Naive thymus-derived CD4-positive, alpha-beta T cell (primary cell): ENCODE measurements at regions of chr7 and their contacts with region 1.

Region 1: DNA sequence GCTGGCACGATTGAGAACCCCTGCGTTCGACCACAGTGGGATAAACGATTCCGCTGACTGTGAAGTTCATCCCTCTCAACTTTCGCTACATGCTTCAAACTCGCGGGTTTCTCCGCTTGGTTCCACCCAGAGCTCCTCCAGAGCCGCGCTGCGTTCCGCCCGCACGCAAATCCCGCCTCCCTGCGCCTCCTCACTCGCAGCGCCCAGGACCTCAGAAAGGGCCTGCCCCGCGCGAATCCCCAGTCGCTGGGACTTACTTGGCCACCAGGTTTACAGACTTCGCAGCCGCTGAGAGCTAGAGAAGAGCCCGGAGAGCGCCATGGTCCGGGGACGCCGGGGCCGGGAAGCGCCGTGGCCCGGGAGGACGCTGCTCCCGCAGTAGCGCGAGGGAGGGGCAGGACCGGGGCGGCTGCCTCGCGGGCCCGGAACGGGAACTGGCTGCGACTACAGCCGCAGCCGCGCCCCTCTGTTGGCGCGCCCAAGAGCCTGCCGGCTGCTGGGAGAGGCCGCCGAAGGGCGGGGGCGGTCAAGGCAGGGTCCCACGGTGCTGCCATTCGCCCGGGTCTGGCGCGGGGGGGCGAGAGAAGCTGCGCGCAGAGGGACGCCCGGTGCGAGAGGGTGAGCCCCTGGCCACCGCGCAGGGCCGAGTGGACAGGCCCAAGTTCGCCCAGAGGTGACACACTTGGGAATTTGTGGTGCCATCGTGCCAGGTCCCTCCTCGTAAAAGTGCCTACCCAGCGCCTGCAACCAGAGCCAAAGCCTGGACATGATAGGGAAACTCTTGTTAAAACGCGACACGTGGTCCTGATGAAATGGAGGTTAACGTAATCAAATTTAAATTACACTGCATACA is at the start of gene NOD1:
- DNase-seq: peak; percentile 50 to 80 (median 65)
- ATAC-seq: peak; percentile 91
- H3K4me3 ChIP-seq: peak within 1 kb of the TSS; percentile 64
- H3K4me3 Mint-ChIP-seq: peak within 1 kb of the TSS in 9 of 10 donors; percentile 92 to 95 (median 94)
- H3K27ac ChIP-seq: peak within 1 kb of the TSS; percentile 80
- H3K27ac Mint-ChIP-seq: peak within 1 kb of the TSS in 6 of 9 donors; percentile 73 to 95 (median 90)
- H3K4me1 ChIP-seq: peaks cover 10 to 19% of the 10 kb centered on the region in 2 donors
- H3K4me1 Mint-ChIP-seq: peaks cover 22 to 54% (median 47%) of the 10 kb centered on the region in 7 donors
- H3K27me3 ChIP-seq: no peaks in the 10 kb centered on the region
- H3K27me3 Mint-ChIP-seq: no peaks in the 10 kb centered on the region
- total RNA-seq, gene NOD1: 17.3 to 24.6 (median 19.2) TPM

Region 2: DNA sequence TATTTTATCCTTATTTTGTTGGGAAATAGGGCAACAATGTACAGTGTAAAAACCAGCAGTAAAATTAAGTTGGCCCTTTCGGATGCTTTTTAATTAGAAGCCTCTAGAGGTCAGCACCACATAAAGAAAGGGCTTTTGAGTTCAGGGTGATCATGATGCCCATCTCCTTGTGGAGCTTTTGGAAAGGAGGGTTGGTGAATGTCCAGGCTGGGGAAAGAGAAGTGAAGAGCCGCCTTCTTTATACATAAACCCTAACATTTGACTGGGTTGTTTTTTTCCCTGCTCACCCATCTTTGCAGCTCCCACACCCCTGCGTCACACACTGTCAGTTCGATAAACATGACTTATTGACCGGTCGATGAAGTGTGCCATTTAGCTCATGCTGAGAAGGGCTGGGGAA is 314.0 kb before region 1 on chr7:
- CTCF ChIA-PET with region 1: no interaction called
- POLR2A ChIA-PET with region 1: no interaction called
- intact Hi-C with region 1: loop called in 1 of 2 experiments (anchors 5 kb)
- DNase-seq: no peak
- ATAC-seq: peak; percentile 43
- H3K4me3 ChIP-seq: no peak overlapping the region
- H3K4me3 Mint-ChIP-seq: no peak overlapping the region
- H3K27ac ChIP-seq: no peak overlapping the region
- H3K27ac Mint-ChIP-seq: no peak overlapping the region
- H3K4me1 ChIP-seq: peaks cover 10 to 20% of the 10 kb centered on the region in 2 donors
- H3K4me1 Mint-ChIP-seq: peaks cover 25 to 44% (median 32%) of the 10 kb centered on the region in 7 donors
- H3K27me3 ChIP-seq: no peaks in the 10 kb centered on the region
- H3K27me3 Mint-ChIP-seq: peaks cover 0 to 3% (median 0%) of the 10 kb centered on the region in 5 donors

Region 3: DNA sequence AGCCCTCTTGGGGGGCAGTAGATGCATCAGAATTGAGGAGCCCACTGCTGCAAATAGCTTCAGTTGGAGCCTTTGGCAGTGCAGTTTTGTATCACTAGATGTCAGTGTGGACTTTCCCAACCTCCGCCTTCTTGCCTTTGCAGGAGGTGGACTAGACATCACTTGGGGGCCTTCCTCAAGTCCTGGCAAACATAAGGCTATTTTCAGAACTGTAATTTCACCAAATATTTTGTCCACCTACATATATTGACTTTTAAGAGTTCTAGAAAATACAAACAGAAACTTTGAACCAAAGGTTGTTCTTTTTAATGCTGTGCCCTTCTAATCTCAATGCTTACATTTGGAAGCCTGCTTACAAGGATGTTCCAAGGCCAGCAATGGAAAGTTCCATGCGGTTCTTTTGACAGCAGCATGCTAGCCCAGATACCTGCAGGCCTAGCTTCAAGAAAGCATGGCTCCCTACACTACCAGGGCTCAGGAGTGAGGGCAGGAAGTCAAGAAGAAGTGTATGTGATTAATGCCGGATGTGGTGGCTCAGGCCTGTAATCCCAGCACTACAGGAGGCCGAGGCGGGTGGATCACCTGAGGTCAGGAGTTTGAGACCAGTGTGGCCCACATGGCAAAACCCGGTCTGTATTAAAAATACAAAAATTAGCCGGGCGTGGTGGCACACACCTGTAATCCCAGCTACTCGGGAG is 202.2 kb before region 1 on chr7:
- CTCF ChIA-PET with region 1: interaction called, 3 read pairs
- POLR2A ChIA-PET with region 1: no interaction called
- intact Hi-C with region 1: loop called in 1 of 2 experiments (anchors 2 kb)
- DNase-seq: peak; percentile 10 to 66 (median 40)
- ATAC-seq: peak; percentile 79
- H3K4me3 ChIP-seq: no peak overlapping the region
- H3K4me3 Mint-ChIP-seq: no peak overlapping the region
- H3K27ac ChIP-seq: no peak overlapping the region
- H3K27ac Mint-ChIP-seq: peak overlapping the region in 1 of 9 donors; percentile 10
- H3K4me1 ChIP-seq: no peaks in the 10 kb centered on the region
- H3K4me1 Mint-ChIP-seq: peaks cover 0 to 9% (median 4%) of the 10 kb centered on the region in 7 donors
- H3K27me3 ChIP-seq: no peaks in the 10 kb centered on the region
- H3K27me3 Mint-ChIP-seq: peaks cover 0 to 4% (median 0%) of the 10 kb centered on the region in 5 donors

Region 4: GRCh38 chr7:30322271-30323005 is 156.1 kb before region 1 on chr7:
- CTCF ChIA-PET with region 1: no interaction called
- POLR2A ChIA-PET with region 1: no interaction called
- intact Hi-C with region 1: loop called in 1 of 2 experiments (anchors 2 kb)
- DNase-seq: peak in 6 of 9 donors; percentile 9 to 48 (median 34)
- ATAC-seq: peak; percentile 86
- H3K4me3 ChIP-seq: peak overlapping the region; percentile 44
- H3K4me3 Mint-ChIP-seq: peak overlapping the region; percentile 72 to 92 (median 86)
- H3K27ac ChIP-seq: peak overlapping the region; percentile 75
- H3K27ac Mint-ChIP-seq: peak overlapping the region; percentile 88 to 97 (median 93)
- H3K4me1 ChIP-seq: peaks cover 20 to 26% of the 10 kb centered on the region in 2 donors
- H3K4me1 Mint-ChIP-seq: peaks cover 41 to 75% (median 71%) of the 10 kb centered on the region in 7 donors
- H3K27me3 ChIP-seq: no peaks in the 10 kb centered on the region
- H3K27me3 Mint-ChIP-seq: no peaks in the 10 kb centered on the region

Region 5: DNA sequence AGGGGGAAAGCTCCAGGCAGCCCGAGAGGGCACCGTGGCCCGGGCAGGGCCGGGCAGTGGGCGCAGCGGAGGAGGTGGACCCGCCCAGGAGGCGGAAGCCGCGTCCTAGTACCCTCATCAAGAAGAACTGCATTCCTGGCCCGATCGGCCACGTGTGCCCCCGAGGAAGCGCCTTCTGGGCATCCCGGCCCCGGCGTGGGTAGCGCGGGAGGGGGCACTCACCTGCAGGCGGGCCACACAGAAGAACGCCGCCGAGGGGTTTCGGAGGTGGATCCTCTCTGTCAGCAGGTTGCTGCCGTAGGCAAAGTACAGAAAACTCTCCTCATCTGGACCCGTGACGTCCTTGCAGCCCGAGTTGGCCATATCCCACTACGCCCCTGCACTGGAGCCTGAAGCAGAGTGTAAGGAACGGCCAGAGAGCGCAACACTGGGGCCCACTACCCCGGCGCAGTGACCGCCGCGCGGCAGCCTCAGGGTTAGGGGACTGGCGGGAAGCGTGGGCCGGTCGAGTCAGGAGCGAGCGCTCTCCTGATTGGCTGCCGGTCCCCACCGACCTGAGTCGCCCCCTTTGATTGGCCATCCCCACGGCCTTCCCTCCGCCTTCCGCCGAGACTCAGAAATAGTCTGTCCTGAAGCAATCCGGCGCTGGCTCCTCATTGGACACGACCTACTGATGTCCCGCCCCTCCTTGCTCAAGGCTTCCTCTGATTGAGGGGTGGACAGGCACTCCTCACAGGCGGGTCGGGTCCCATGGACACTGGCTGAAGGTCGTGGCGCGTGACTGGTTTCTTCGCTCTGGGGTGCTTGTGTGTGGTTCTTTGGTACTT is 26.0 kb after region 1 on chr7 and contains the start of gene GGCT:
- CTCF ChIA-PET with region 1: no interaction called
- POLR2A ChIA-PET with region 1: interaction called, 5 read pairs
- intact Hi-C with region 1: loop called (anchors 1 kb)
- DNase-seq: peak; percentile 88 to 97 (median 95)
- ATAC-seq: peak; percentile 99
- H3K4me3 ChIP-seq: peak within 1 kb of the TSS; percentile 91
- H3K4me3 Mint-ChIP-seq: peak within 1 kb of the TSS; percentile 90 to 96 (median 95)
- H3K27ac ChIP-seq: peak within 1 kb of the TSS; percentile 72
- H3K27ac Mint-ChIP-seq: peak within 1 kb of the TSS; percentile 87 to 99 (median 91)
- H3K4me1 ChIP-seq: peaks cover 12% of the 10 kb centered on the region in 2 donors
- H3K4me1 Mint-ChIP-seq: peaks cover 19 to 51% (median 44%) of the 10 kb centered on the region in 7 donors
- H3K27me3 ChIP-seq: no peaks in the 10 kb centered on the region
- H3K27me3 Mint-ChIP-seq: no peaks in the 10 kb centered on the region
- total RNA-seq, gene GGCT: 9.5 to 39.2 (median 10.8) TPM

Region 6: DNA sequence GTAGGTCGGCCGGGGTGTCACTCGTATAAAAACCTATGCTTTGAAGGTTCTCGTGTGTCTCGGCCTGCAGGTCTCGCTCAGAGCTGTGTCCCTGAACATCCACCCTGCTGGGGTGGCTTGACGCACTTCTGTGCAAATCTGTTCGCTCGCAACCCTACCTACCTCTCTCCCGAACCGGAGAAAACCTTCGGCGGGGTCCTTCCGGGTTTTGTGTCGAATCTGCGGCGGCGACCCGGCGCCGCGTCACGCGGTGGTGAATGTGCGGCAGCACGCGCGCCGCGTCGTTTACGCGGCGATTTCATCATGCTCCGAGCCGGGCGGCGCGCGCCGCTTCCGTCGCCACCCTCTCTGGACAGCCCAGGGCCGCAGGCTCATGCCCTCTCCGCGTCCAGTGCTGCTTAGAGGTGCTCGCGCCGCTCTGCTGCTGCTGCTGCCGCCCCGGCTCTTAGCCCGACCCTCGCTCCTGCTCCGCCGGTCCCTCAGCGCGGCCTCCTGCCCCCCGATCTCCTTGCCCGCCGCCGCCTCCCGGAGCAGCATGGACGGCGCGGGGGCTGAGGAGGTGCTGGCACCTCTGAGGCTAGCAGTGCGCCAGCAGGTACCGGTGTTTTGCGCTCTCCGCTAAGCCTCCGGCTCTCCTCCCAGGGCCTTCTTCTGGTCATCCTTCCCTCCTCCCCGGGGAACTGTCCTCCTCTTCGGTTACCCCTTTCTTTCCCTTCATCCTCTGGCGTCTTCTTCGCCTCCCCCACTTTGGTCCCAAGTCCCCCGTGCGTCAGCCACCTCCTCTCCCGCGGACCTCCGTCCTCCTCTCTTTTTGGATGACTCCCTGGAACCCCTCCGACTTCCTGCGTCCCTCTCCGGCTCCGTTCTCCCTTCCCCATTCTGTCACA is 116.2 kb after region 1 on chr7 and contains the start of gene GARS1:
- CTCF ChIA-PET with region 1: no interaction called
- POLR2A ChIA-PET with region 1: interaction called, 4 read pairs
- intact Hi-C with region 1: loop called (anchors 1 to 2 kb)
- DNase-seq: peak; percentile 85 to 92 (median 90)
- ATAC-seq: peak; percentile 91
- H3K4me3 ChIP-seq: peak within 1 kb of the TSS; percentile 62
- H3K4me3 Mint-ChIP-seq: peak within 1 kb of the TSS; percentile 91 to 100 (median 99)
- H3K27ac ChIP-seq: peak within 1 kb of the TSS; percentile 91
- H3K27ac Mint-ChIP-seq: peak within 1 kb of the TSS; percentile 97 to 100 (median 99)
- H3K4me1 ChIP-seq: peaks cover 3 to 22% of the 10 kb centered on the region in 2 donors
- H3K4me1 Mint-ChIP-seq: peaks cover 52 to 88% (median 77%) of the 10 kb centered on the region in 7 donors
- H3K27me3 ChIP-seq: no peaks in the 10 kb centered on the region
- H3K27me3 Mint-ChIP-seq: no peaks in the 10 kb centered on the region
- total RNA-seq, gene GARS1: 73.8 to 143 (median 75.8) TPM

Region 7: GRCh38 chr7:31763548-31763947 is 1285.0 kb after region 1 on chr7:
- CTCF ChIA-PET with region 1: no interaction called
- POLR2A ChIA-PET with region 1: no interaction called
- intact Hi-C with region 1: no loop called
- DNase-seq: no peak
- ATAC-seq: no peak
- H3K4me3 ChIP-seq: no peak overlapping the region
- H3K4me3 Mint-ChIP-seq: no peak overlapping the region
- H3K27ac ChIP-seq: no peak overlapping the region
- H3K27ac Mint-ChIP-seq: no peak overlapping the region
- H3K4me1 ChIP-seq: no peaks in the 10 kb centered on the region
- H3K4me1 Mint-ChIP-seq: no peaks in the 10 kb centered on the region
- H3K27me3 ChIP-seq: no peaks in the 10 kb centered on the region
- H3K27me3 Mint-ChIP-seq: no peaks in the 10 kb centered on the region